Panc1 (cell line): ENCODE measurements at regions of chr1 and their contacts with region 1.

Region 1: DNA sequence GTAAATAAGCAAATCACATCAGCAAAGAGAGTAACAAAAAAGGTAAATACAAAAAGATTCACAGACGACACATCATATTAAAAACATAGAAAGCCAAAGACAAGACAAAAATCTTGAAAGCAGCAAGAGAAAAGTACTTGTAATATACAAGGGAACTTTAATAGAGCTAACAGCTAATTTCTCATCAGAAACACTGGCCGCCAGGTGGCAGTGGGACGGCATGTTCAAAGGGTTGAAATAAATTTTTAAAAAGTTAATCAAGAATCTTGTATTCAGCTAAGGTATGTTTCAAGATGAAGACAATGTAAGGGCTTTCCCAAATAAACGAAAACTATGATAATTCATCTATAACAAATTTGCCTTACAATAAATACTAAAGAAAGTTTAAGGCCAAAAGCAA is 358.1 kb downstream of the LRRIQ3 start:
- DNase-seq: no peak
- ATAC-seq: no peak
- H3K4me3 ChIP-seq: no peak overlapping the region
- H3K27ac ChIP-seq: no peak overlapping the region
- H3K4me1 ChIP-seq: no peaks in the 10 kb centered on the region
- H3K27me3 ChIP-seq: no peaks in the 10 kb centered on the region
- CTCF ChIP-seq: peak; percentile 40; the same call in 1 of the 2 replicates

Region 2: DNA sequence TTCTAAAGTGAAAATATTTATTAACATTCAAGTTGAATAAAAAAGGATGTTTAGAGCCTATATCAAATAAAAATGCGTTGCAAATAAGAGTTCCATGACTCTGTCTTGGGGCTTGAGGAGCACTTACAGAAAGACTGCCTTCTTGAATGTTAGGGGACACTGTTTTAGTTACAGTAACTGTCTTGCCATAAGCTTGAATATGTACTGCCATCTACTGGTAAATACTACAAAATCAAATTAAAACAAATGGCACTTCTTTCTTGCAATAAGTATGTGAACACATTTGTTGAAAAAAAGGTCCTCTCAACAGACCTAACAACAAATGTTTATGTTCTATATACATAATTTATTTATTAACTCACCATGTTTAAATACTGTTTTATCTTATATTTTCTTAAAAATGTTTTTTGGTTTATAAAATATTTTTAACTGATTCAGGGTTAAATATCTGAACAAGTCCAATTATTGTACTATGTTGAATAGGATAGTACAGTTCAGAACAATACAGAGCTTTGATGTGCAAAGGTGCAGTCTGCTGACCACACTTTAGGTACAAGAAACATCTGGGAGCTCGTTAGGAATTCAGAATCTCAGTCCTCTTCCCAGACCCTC is 158.5 kb after region 1 on chr1:
- CTCF ChIA-PET with region 1: no interaction called
- POLR2A ChIA-PET with region 1: no interaction called
- in situ Hi-C with region 1: no loop called
- intact Hi-C with region 1: loop called (anchors 5 kb)
- DNase-seq: peak; percentile 32
- ATAC-seq: peak; percentile 63; the same call in 1 of the 2 replicates
- H3K4me3 ChIP-seq: no peak overlapping the region
- H3K27ac ChIP-seq: no peak overlapping the region
- H3K4me1 ChIP-seq: no peaks in the 10 kb centered on the region
- H3K27me3 ChIP-seq: no peaks in the 10 kb centered on the region
- CTCF ChIP-seq: peak; percentile 50; the same call in 1 of the 2 replicates

Region 3: GRCh38 chr1:74733604-74734484 is 893.9 kb after region 1 on chr1:
- CTCF ChIA-PET with region 1: interaction called, 10 read pairs
- POLR2A ChIA-PET with region 1: no interaction called
- in situ Hi-C with region 1: no loop called
- intact Hi-C with region 1: no loop called
- DNase-seq: peak; percentile 81
- ATAC-seq: peak; percentile 73
- H3K4me3 ChIP-seq: peak overlapping the region; percentile 72 to 73
- H3K27ac ChIP-seq: peak overlapping the region; percentile 93
- H3K4me1 ChIP-seq: peaks cover 11% of the 10 kb centered on the region
- H3K27me3 ChIP-seq: no peaks in the 10 kb centered on the region
- CTCF ChIP-seq: peak; percentile 78; the same call in 1 of the 2 replicates